Activated B cell treated with CpG ODN at 0.5 μM for 24 hours (primary cell): ENCODE measurements at regions of chr6 and their contacts with region 1.

Region 1: DNA sequence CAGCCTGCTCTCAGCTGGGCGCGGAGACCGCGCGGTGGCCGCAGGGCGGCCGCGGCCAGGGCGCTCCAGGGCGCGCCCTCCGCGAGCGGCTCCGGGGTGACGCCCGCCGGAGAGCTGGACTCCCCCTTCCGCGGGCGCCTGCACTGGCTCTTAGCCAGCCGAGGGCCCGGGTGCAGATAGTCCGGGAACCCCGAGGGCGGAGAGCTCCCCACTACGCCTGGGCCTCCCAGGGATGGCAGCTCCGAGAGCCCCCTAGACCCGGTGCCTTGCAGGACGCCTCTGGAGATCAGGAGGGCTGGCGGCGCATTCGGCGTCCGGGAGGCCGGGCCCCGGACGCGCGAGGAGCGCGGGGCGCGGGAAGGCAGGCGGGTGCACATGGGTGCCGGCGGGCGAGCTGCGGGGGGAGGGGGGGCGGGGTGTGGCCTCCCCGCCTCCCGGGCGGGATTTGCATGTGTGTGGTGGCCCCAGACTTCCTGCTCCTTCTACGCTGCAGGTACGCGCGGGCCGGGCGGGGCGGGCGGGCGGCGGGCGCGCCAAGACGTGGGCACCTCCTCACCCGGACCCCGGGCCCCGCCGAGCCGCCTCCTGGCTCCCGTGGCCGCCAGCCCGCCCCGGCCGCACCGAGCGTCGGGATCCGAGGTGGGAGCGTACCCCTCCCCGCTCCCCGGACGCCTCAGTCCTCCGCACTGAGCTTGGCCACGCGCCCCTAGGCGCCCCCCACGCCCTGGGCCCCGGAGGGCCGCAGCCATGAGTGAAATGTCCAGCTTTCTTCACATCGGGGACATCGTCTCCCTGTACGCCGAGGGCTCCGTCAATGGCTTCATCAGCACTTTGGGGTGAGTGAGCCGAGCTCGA is at the start of gene ITPR3:
- DNase-seq: peak; percentile 71
- ATAC-seq: peak; percentile 85
- H3K4me3 Mint-ChIP-seq: peak within 1 kb of the TSS; percentile 89
- H3K27ac Mint-ChIP-seq: peak within 1 kb of the TSS; percentile 76
- H3K4me1 Mint-ChIP-seq: peaks cover 47% of the 10 kb centered on the region
- H3K27me3 Mint-ChIP-seq: no peaks in the 10 kb centered on the region
- CTCF ChIP-seq: no peak
- total RNA-seq, gene ITPR3: 31.7 and 35.5 TPM in 2 replicates

Region 2: DNA sequence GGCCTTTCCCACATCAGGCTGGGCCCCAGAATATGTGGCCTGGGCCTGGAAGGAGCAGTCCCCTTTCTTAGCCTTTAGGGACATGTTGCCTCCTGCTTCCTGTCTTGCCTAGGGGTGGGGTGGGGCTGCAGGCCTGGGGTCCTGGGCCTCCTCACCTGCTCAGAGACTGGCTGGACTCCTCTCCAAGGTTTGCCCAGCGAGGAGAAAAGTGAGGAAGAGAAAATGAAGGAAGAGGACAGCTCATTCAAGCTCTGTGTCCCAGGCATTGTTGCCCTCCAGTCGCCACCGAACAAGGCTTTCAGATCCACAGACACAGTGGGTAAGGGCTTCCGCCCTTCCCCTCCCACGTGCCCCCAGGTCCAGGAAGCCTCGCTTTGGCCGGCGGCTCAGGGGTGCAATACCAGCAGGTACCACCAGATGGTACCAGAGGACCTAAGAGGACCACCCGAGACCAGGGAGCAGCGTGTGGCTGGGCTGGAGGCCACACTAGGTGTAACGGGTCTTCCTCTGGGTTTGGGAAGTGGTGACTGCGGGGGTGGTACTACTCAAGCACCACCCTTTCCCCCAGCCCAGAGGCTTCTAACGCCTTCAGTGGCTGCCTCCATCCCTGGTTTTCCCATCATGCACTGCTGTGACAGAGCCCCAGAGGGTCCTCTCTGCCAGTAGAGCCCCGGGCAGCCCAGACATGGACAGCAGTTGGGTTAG is 35.5 kb before region 1 on chr6:
- CTCF ChIA-PET with region 1: interaction called, 9 read pairs
- POLR2A ChIA-PET with region 1: interaction called, 37 read pairs
- intact Hi-C with region 1: no loop called
- DNase-seq: peak; percentile 90
- ATAC-seq: peak; percentile 94
- H3K4me3 Mint-ChIP-seq: peak overlapping the region; percentile 61
- H3K27ac Mint-ChIP-seq: peak overlapping the region; percentile 93
- H3K4me1 Mint-ChIP-seq: peaks cover 31% of the 10 kb centered on the region
- H3K27me3 Mint-ChIP-seq: no peaks in the 10 kb centered on the region
- CTCF ChIP-seq: peak; percentile 96

Region 3: DNA sequence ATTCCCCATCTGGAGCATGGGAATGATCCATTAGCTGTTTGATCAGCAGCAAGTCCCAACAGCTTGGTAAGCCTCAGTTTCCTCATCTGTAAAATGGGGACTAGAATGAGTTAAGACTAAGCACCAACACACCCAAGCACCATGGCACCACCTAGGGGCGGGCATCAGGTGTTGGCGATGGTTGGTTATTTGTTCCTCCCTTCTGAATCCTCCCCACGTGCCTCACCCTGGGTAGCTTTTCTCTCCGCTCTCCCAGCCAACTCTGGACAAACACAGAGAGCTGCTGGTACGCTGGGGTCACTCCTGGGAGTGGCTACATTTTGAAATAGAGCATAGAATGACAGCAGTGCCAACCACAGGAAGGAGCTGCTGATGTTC is 13.3 kb before region 1 on chr6:
- CTCF ChIA-PET with region 1: interaction called, 7 read pairs
- POLR2A ChIA-PET with region 1: interaction called, 20 read pairs
- intact Hi-C with region 1: no loop called
- DNase-seq: no peak
- ATAC-seq: peak; percentile 87
- H3K4me3 Mint-ChIP-seq: no peak overlapping the region
- H3K27ac Mint-ChIP-seq: no peak overlapping the region
- H3K4me1 Mint-ChIP-seq: peaks cover 26% of the 10 kb centered on the region
- H3K27me3 Mint-ChIP-seq: no peaks in the 10 kb centered on the region
- CTCF ChIP-seq: no peak

Region 4: DNA sequence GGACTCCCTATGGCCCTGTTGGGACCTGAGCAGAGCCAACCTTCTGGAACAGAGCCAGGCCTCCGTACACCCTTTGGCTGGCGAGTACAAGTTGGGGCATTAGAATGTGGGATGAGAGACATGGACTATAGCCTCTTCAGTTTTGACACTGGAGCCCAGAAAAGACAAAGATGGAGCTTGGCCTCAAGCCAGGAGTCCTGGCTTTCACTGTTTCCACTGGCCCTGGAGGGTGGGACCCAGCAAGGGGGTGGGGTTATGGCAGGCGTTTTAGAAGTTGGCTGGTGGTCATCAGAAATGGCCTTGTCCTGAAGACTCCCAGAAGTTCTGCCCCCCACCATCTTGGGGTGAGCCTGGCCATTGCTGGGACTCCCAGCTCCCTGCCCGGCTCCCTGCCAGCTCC is 21.8 kb after region 1 on chr6:
- CTCF ChIA-PET with region 1: no interaction called
- POLR2A ChIA-PET with region 1: no interaction called
- intact Hi-C with region 1: no loop called
- DNase-seq: no peak
- ATAC-seq: no peak
- H3K4me3 Mint-ChIP-seq: no peak overlapping the region
- H3K27ac Mint-ChIP-seq: no peak overlapping the region
- H3K4me1 Mint-ChIP-seq: peaks cover 14% of the 10 kb centered on the region
- H3K27me3 Mint-ChIP-seq: no peaks in the 10 kb centered on the region
- CTCF ChIP-seq: no peak

Region 5: DNA sequence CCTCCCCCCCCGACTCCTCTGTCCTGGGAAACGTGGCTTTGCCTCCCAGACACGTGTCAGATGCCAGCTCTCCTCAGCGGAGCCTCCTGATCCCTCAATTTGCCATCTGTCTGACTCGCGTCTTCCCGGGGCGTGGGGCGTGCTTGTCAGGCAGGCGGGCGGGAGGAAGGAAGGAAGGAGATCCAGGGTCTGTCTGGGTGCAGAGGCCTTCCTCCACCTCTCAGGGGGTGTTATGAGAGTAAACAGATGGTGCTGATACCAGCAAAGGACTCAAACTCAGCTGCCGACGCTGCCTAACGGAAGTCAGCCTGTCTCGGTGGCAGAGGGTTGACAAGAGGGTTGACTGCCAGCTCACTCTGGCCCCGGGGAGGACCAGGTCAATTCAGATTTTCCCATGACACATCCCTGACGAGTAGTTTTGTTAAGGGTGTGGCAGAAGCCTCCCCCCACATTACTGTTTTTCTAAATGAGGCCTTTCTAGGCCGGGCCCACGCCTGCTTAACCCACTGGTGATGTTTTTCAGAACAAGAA is 73.4 kb after region 1 on chr6:
- CTCF ChIA-PET with region 1: no interaction called
- POLR2A ChIA-PET with region 1: interaction called, 17 read pairs
- intact Hi-C with region 1: loop called (anchors 2 kb)
- DNase-seq: no peak
- ATAC-seq: peak; percentile 14
- H3K4me3 Mint-ChIP-seq: peak overlapping the region; percentile 24
- H3K27ac Mint-ChIP-seq: peak overlapping the region; percentile 83
- H3K4me1 Mint-ChIP-seq: peaks cover 78% of the 10 kb centered on the region
- H3K27me3 Mint-ChIP-seq: no peaks in the 10 kb centered on the region
- CTCF ChIP-seq: no peak

Region 6: GRCh38 chr6:33711140-33712129 is 90.4 kb after region 1 on chr6 and contains the start of gene UQCC2:
- CTCF ChIA-PET with region 1: interaction called, 4 read pairs
- POLR2A ChIA-PET with region 1: interaction called, 8 read pairs
- intact Hi-C with region 1: loop called (anchors 5 kb)
- DNase-seq: peak; percentile 93
- ATAC-seq: peak; percentile 86
- H3K4me3 Mint-ChIP-seq: peak within 1 kb of the TSS; percentile 98
- H3K27ac Mint-ChIP-seq: peak within 1 kb of the TSS; percentile 99
- H3K4me1 Mint-ChIP-seq: peaks cover 29% of the 10 kb centered on the region
- H3K27me3 Mint-ChIP-seq: no peaks in the 10 kb centered on the region
- CTCF ChIP-seq: no peak
- total RNA-seq, gene UQCC2: 26.2 and 37.5 TPM in 2 replicates